ENCODE measurements at regions of chr4 and their contacts with region 1.

Region 1: DNA sequence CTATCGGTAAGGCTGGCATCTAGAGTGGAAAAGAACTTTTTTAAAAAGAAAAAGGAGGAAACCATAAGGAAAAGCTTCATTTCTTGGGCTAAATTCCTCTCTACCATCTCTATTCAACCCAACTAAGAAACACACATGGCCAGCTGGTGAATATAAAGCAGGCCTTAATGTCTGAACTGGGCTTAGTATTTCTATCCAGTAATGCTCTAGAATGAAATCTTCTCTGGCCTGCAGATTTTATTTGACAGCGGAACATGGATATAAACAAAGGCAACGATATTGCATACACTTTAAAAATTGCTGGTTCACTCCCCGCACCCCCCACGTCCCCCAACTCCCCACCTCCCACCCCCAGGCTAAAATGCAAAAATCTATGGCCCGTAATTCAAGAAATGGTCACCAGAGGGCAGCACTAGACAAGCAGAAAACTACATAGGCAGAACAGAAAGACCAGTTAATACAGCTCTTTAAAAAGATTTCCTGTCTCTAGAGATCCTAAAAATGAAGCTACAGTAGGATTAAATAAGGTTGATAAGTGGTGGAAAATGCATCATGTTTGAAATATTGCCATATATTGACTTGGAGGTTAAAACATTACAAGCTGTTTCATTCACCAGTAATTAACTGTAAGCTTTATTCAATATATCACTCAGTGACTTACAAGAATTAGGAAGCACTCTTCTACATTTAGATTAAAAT is 155.2 kb upstream of the GALNT7 start:
- DNase-seq: peak in 1 of 2 experiments; percentile 88
- H3K4me3 ChIP-seq: no peak overlapping the region
- H3K27ac ChIP-seq: no peak overlapping the region
- H3K4me1 ChIP-seq: peaks cover 0 to 3% (median 1%) of the 10 kb centered on the region in 4 experiments; a peak in 4 of 7 replicates
- H3K27me3 ChIP-seq: no peaks in the 10 kb centered on the region
- CTCF ChIP-seq: peak in 2 of 3 experiments; percentile 46 to 69; a peak in 3 of 4 replicates
- EP300 ChIP-seq: no peak
- POLR2A ChIP-seq: no peak
- RAD21 ChIP-seq: peak; percentile 80 to 86

Region 2: GRCh38 chr4:172892300-172892699 is 121.1 kb before region 1 on chr4:
- CTCF ChIA-PET with region 1: interaction called, 22 read pairs
- POLR2A ChIA-PET with region 1: no interaction called
- DNase-seq: peak; percentile 17 to 59
- H3K4me3 ChIP-seq: no peak overlapping the region
- H3K27ac ChIP-seq: no peak overlapping the region
- H3K4me1 ChIP-seq: no peaks in the 10 kb centered on the region
- H3K27me3 ChIP-seq: no peaks in the 10 kb centered on the region
- CTCF ChIP-seq: peak in 2 of 3 experiments; percentile 75 to 78; a peak in 3 of 4 replicates
- EP300 ChIP-seq: no peak
- POLR2A ChIP-seq: no peak
- RAD21 ChIP-seq: peak; percentile 70 to 77

Region 3: GRCh38 chr4:173046818-173047217 is 33.4 kb after region 1 on chr4:
- CTCF ChIA-PET with region 1: no interaction called
- POLR2A ChIA-PET with region 1: no interaction called
- DNase-seq: no peak
- H3K4me3 ChIP-seq: no peak overlapping the region
- H3K27ac ChIP-seq: no peak overlapping the region
- H3K4me1 ChIP-seq: no peaks in the 10 kb centered on the region; a peak in 1 of 7 replicates
- H3K27me3 ChIP-seq: no peaks in the 10 kb centered on the region
- CTCF ChIP-seq: no peak
- EP300 ChIP-seq: no peak
- POLR2A ChIP-seq: no peak
- RAD21 ChIP-seq: no peak

Region 4: DNA sequence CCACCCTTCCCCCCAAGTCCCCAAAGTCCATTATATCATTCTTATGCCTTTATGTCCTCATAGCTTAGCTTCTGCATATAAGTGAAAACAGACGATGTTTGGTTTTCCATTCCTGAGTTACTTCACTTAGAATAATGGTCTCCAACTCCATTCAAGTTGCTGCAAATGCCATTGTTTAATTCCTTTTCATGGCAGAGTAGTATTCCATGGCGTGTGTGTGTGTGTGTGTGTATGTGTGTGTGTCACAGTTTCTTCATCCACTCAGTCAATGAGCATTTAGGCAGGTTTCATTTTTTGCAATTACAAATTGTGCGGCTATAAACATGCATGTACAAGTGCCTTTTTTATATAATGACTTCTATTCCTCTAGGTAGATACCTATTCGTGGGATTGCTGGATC is 47.8 kb after region 1 on chr4:
- CTCF ChIA-PET with region 1: no interaction called
- POLR2A ChIA-PET with region 1: no interaction called
- DNase-seq: no peak
- H3K4me3 ChIP-seq: no peak overlapping the region
- H3K27ac ChIP-seq: no peak overlapping the region
- H3K4me1 ChIP-seq: peaks cover 0 to 5% (median 0%) of the 10 kb centered on the region in 4 experiments; a peak in 2 of 7 replicates
- H3K27me3 ChIP-seq: no peaks in the 10 kb centered on the region
- CTCF ChIP-seq: no peak
- EP300 ChIP-seq: no peak
- POLR2A ChIP-seq: no peak
- RAD21 ChIP-seq: no peak

Region 5: GRCh38 chr4:173185847-173186510 is 172.6 kb after region 1 on chr4:
- CTCF ChIA-PET with region 1: interaction called, 10 read pairs
- POLR2A ChIA-PET with region 1: no interaction called
- DNase-seq: no peak
- H3K4me3 ChIP-seq: no peak overlapping the region
- H3K27ac ChIP-seq: no peak overlapping the region
- H3K4me1 ChIP-seq: peaks cover 0 to 6% (median 0%) of the 10 kb centered on the region in 4 experiments; a peak in 2 of 7 replicates
- H3K27me3 ChIP-seq: no peaks in the 10 kb centered on the region
- CTCF ChIP-seq: no peak
- EP300 ChIP-seq: no peak
- POLR2A ChIP-seq: no peak
- RAD21 ChIP-seq: no peak

Region 6: DNA sequence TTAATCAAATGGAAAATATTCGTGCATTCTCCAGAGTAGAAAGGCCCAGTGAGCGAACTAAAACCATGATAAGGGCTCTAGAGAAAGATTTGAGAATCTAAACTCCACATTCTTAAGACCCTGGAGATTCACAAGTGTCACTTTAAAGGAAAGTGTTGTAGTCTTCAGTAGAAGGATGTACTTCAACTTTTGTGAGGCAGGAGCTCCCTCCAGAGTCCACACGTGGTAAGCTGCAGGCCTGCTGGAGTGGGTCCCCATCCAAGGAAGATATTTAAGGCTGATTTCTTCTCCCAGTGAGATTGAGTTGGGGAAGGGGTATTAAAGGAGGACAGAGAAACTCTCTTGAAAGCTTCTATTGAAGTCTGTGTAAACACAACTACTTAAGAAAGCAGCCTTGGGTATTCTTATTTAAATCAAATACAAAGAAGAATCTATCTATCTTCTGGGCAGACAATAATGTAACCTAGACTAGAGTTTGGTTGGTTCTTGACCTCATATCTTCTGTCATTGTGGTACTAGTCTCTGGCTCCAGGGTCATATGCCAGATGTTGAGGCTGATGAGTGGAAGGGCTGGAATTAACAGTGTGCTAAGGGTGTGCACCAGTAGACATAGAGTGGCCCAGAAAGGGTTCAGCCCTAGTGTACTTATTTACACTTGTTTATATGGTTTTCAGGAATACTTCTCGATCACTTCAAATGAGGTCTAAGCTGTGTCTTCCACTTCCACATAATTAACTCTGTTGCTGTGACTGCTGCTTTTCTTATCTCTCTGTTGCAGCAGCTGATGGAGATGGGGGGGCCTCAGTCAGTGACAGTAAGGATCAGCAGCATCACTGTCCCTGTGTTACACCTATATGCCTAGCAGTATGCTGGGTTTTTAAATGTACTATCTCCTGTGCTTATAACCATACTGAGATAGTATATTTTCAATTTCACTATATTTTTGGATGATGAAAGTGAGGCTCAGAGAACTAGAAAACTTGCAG is 244.6 kb after region 1 on chr4:
- CTCF ChIA-PET with region 1: interaction called, 80 read pairs
- POLR2A ChIA-PET with region 1: interaction called, 7 read pairs
- DNase-seq: peak in 1 of 2 experiments; percentile 31
- H3K4me3 ChIP-seq: no peak overlapping the region
- H3K27ac ChIP-seq: no peak overlapping the region
- H3K4me1 ChIP-seq: peaks cover 0 to 6% (median 4%) of the 10 kb centered on the region in 4 experiments; a peak in 2 of 7 replicates
- H3K27me3 ChIP-seq: no peaks in the 10 kb centered on the region
- CTCF ChIP-seq: peak; percentile 79 to 89 (median 79)
- EP300 ChIP-seq: no peak
- POLR2A ChIP-seq: no peak
- RAD21 ChIP-seq: peak; percentile 97 to 99

Region 7: DNA sequence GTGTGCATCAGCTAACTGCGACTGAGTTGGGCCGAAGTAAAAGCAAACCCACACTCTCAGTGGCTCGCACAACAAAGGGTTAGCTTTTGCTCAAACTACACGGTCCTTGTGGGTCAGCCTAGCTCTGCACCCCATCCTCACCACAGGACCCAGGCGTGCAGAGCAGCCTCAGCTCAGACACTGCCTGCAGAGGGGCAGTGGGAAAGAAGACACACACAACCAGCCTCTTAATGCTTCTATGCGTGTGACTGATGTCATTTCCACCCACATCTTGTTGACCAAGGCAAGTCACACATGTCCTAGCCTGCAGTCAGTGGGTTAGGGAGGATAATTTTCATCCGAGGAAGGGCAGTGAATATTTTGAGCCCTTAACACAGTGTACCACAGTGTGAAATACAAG is 280.3 kb after region 1 on chr4:
- CTCF ChIA-PET with region 1: interaction called, 25 read pairs
- POLR2A ChIA-PET with region 1: no interaction called
- DNase-seq: no peak
- H3K4me3 ChIP-seq: no peak overlapping the region
- H3K27ac ChIP-seq: no peak overlapping the region
- H3K4me1 ChIP-seq: 0 out of 7 replicates have a peak, but pooled peaks cover 0 to 1% (median 0%) of the 10 kb centered on the region in 4 experiments
- H3K27me3 ChIP-seq: no peaks in the 10 kb centered on the region
- CTCF ChIP-seq: no peak
- EP300 ChIP-seq: no peak
- POLR2A ChIP-seq: no peak
- RAD21 ChIP-seq: no peak

Region 8: GRCh38 chr4:173360587-173361221 is 347.3 kb after region 1 on chr4:
- CTCF ChIA-PET with region 1: interaction called, 11 read pairs
- POLR2A ChIA-PET with region 1: interaction called, 3 read pairs
- DNase-seq: no peak
- H3K4me3 ChIP-seq: no peak overlapping the region
- H3K27ac ChIP-seq: no peak overlapping the region
- H3K4me1 ChIP-seq: no peaks in the 10 kb centered on the region
- H3K27me3 ChIP-seq: no peaks in the 10 kb centered on the region
- CTCF ChIP-seq: peak in 2 of 3 experiments; percentile 22 to 34; a peak in 2 of 4 replicates
- EP300 ChIP-seq: no peak
- POLR2A ChIP-seq: no peak
- RAD21 ChIP-seq: peak; percentile 19 to 35; a peak in 3 of 4 replicates